WTC11 (cell line): ENCODE measurements at regions of chr12 and their contacts with region 1.

Region 1: DNA sequence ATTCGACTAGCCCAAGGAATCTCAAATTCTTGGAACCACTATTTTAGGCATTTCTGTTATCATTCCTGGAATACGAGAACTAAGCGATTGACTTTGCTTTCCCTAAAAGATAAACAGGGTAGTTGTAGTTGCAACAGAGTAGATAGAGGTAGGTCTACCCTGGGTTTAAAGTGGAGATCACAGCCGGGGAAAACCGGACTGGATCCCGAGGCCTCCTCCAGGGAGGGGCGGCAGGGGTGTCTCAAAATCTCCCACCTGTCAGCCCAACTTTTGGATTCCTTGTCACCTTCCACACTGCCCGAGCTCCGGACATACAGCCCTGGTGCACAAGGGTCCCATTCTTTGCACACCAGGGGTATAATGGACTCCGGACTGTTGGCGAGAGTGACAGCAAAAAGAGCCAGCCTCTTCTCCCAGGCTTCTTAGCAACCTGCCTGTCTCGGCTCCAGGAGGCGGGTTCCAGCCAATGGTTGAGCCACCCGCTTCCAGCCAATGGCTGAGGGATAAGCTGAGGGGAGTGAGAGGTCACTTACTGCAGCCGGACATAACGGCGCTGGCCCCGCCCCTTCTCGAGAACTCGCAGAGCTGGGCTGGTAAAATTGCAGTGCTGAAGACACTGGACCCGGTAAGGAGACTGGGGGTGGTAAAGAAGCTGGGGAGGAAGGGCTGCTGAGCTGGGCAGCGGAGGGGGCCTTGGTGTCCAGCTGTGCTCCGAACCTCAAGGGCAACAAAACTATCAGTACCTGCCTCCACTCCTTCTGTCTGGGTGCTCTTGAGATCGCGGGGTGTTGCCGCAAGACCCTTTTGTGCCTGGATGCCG is at the start of gene SUOX:
- DNase-seq: peak; percentile 96
- ATAC-seq: peak; percentile 99
- H3K4me3 Mint-ChIP-seq: peak within 1 kb of the TSS; percentile 95
- H3K27ac Mint-ChIP-seq: peak within 1 kb of the TSS; percentile 96
- H3K4me1 Mint-ChIP-seq: 0 out of 2 replicates have a peak, but pooled peaks cover 7% of the 10 kb centered on the region
- H3K27me3 Mint-ChIP-seq: no peaks in the 10 kb centered on the region
- CTCF ChIP-seq: no peak
- total RNA-seq, gene SUOX: 20.3 to 23.2 TPM (median 23.2 TPM) in 3 replicates

Region 2: GRCh38 chr12:55982319-55982936 is 14.5 kb before region 1 on chr12:
- CTCF ChIA-PET with region 1: interaction called, 14 read pairs
- POLR2A ChIA-PET with region 1: no interaction called
- DNase-seq: no peak
- ATAC-seq: no peak
- H3K4me3 Mint-ChIP-seq: no peak overlapping the region
- H3K27ac Mint-ChIP-seq: no peak overlapping the region; the same call in 1 of the 2 replicates
- H3K4me1 Mint-ChIP-seq: no peaks in the 10 kb centered on the region
- H3K27me3 Mint-ChIP-seq: no peaks in the 10 kb centered on the region
- CTCF ChIP-seq: no peak

Region 3: GRCh38 chr12:56007564-56008559 is 10.9 kb after region 1 on chr12:
- CTCF ChIA-PET with region 1: interaction called, 49 read pairs
- POLR2A ChIA-PET with region 1: interaction called, 20 read pairs
- DNase-seq: peak; percentile 86
- ATAC-seq: peak; percentile 91
- H3K4me3 Mint-ChIP-seq: peak overlapping the region; percentile 84
- H3K27ac Mint-ChIP-seq: peak overlapping the region; percentile 82
- H3K4me1 Mint-ChIP-seq: peaks cover 19% of the 10 kb centered on the region
- H3K27me3 Mint-ChIP-seq: no peaks in the 10 kb centered on the region; the same call in 1 of the 2 replicates
- CTCF ChIP-seq: no peak

Region 4: GRCh38 chr12:56020423-56021184 is 23.7 kb after region 1 on chr12 and contains the start of gene IKZF4:
- CTCF ChIA-PET with region 1: interaction called, 32 read pairs
- POLR2A ChIA-PET with region 1: no interaction called
- DNase-seq: peak; percentile 72
- ATAC-seq: peak; percentile 91
- H3K4me3 Mint-ChIP-seq: peak within 1 kb of the TSS; percentile 89
- H3K27ac Mint-ChIP-seq: peak within 1 kb of the TSS; percentile 95
- H3K4me1 Mint-ChIP-seq: peaks cover 29% of the 10 kb centered on the region
- H3K27me3 Mint-ChIP-seq: no peaks in the 10 kb centered on the region
- CTCF ChIP-seq: no peak
- total RNA-seq, gene IKZF4: 13.6 to 14.9 TPM (median 14.8 TPM) in 3 replicates

Region 5: GRCh38 chr12:56029666-56030293 is 32.9 kb after region 1 on chr12:
- CTCF ChIA-PET with region 1: interaction called, 68 read pairs
- POLR2A ChIA-PET with region 1: no interaction called
- DNase-seq: peak; percentile 50
- ATAC-seq: peak; percentile 82
- H3K4me3 Mint-ChIP-seq: no peak overlapping the region
- H3K27ac Mint-ChIP-seq: no peak overlapping the region
- H3K4me1 Mint-ChIP-seq: no peaks in the 10 kb centered on the region
- H3K27me3 Mint-ChIP-seq: no peaks in the 10 kb centered on the region
- CTCF ChIP-seq: peak; percentile 54

Region 6: DNA sequence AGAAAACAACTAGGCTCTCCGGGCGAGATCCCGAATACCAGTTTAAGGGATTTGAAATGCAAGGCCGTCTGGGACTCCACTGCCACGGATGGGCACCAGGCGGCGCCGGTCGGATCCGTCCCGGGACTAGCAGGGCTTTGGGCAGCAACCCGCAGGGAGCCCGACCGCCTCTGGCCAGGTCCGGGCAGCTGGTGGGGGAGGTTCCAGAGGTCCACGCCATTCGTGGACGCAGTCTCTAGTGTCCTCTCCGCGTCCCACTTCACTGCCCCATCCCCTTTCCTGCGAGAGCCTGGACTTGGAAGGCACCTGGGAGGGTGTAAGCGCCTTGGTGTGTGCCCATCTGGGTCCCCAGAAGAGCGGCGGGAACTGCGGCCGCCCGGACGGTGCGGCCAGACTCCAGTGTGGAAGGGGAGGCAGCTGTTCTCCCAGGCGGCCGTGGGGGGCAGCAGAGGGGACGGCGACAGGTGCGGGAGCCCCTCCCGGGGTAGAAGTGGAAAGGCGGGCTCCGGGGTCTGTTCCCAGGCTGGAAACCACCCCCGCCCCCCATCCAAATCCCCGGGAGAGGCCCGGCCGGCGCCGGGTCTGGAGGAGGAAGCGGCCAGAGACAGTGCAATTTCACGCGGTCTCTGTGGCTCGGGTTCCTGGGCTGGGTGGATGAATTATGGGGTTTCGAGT is 82.2 kb after region 1 on chr12:
- CTCF ChIA-PET with region 1: interaction called, 11 read pairs
- POLR2A ChIA-PET with region 1: no interaction called
- DNase-seq: peak; percentile 96
- ATAC-seq: peak; percentile 68
- H3K4me3 Mint-ChIP-seq: peak overlapping the region; percentile 89
- H3K27ac Mint-ChIP-seq: peak overlapping the region; percentile 98
- H3K4me1 Mint-ChIP-seq: peaks cover 23% of the 10 kb centered on the region
- H3K27me3 Mint-ChIP-seq: no peaks in the 10 kb centered on the region
- CTCF ChIP-seq: peak; percentile 46; the same call in 1 of the 2 replicates